ENCODE measurements at regions of chr17 and their contacts with region 1.

Region 1: DNA sequence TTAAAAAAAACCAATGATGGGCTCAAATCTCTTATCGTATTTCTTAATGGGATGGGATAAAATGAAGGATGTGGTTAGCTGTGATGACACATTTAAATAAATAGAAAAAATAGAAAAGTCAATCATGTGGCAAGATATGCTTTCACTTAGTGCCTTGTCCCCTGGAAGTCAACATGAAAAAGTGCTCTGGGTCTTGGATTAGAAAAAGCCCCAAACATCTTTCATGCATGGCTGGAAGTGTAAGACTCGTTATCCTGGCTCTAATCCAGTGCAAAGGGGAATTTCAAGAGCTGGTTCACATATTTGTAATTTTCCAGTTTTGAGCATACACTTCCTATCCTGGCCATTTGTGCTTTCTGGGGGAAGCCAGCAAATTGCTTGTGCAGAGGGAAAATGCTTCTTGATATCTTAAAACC is 160.9 kb downstream of the MAP2K6 start:
- DNase-seq: no peak
- ATAC-seq: no peak
- H3K4me3 Mint-ChIP-seq: no peak overlapping the region
- H3K27ac Mint-ChIP-seq: no peak overlapping the region
- H3K4me1 Mint-ChIP-seq: peaks cover 2% of the 10 kb centered on the region
- H3K27me3 Mint-ChIP-seq: peaks cover 9% of the 10 kb centered on the region
- CTCF ChIP-seq: no peak

Region 2: DNA sequence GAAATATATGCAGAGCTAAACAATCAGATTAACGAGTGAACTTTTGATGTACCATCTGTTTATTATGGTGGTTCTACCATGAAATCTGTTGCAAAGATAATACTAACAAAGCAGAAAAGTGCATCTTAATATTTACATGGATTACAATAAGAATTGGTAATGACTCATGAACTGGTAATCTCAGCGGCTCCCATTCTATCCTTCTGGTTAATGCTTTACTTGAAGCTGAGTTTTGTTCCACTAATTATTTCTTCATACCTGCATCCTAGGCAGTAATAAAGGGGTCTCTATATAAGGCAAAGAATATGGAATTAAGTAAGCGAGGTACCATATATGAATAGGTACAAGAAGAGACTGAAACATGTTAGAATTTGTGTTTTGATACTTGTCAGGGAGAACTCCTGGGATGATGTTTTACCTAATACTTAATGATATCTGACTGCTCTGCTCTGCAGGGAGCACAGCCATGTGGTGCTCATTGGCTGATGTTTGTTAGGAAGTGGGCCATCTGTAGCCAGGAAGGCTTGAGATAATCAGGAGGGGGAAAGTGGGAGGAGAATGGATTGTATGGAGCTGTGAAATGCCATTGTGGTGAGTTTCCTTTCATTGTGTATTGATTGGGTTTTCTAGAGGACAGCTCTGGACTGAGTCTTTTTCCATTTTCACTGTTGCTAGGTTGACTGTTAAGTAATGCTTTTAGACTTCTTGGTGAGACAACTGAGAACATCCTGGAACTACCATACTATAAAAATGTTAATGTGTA is 108.3 kb before region 1 on chr17:
- CTCF ChIA-PET with region 1: no interaction called
- POLR2A ChIA-PET with region 1: no interaction called
- intact Hi-C with region 1: no loop called
- DNase-seq: no peak
- ATAC-seq: no peak
- H3K4me3 Mint-ChIP-seq: no peak overlapping the region
- H3K27ac Mint-ChIP-seq: no peak overlapping the region
- H3K4me1 Mint-ChIP-seq: peaks cover 12% of the 10 kb centered on the region
- H3K27me3 Mint-ChIP-seq: no peaks in the 10 kb centered on the region
- CTCF ChIP-seq: no peak

Region 3: GRCh38 chr17:69997332-69997731 is 422.0 kb after region 1 on chr17:
- CTCF ChIA-PET with region 1: no interaction called
- POLR2A ChIA-PET with region 1: no interaction called
- intact Hi-C with region 1: loop called (anchors 5 kb)
- DNase-seq: no peak
- ATAC-seq: no peak
- H3K4me3 Mint-ChIP-seq: no peak overlapping the region
- H3K27ac Mint-ChIP-seq: no peak overlapping the region
- H3K4me1 Mint-ChIP-seq: no peaks in the 10 kb centered on the region
- H3K27me3 Mint-ChIP-seq: peaks cover 3% of the 10 kb centered on the region
- CTCF ChIP-seq: no peak

Measured in activated CD8-positive, alpha-beta T cell treated with anti-CD3 and anti-CD28 coated beads for 36 hours (primary cell).